CD8-positive, alpha-beta memory T cell (primary cell): ENCODE measurements at regions of chr9 and their contacts with region 1.

Region 1: DNA sequence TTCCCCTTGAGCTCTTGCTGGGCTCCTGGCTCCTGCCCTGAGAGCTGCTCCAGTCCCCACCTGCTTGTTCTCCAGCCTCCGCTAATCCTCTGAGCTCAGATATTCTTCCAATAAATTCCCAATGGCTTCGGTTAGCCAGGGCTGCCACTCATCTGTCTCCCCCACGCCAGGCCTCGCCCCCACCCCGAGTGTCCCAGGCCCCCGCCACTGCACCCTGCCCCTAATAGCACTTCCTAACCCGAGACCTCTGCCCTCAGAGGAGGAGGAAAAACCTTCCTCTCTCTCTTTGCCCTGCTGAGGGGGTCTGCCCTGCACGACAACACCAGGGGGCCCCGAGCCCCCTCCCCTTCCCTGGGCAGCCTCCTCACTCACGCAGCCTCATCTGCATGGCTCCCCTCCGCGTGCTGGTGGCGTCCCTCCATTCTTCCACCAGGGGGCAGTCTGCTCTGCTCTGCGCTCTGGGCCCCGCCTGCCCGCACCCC is 5.4 kb upstream of the LCN15 start:
- DNase-seq: peak in 4 of 5 donors; percentile 21 to 27 (median 24)
- H3K4me3 ChIP-seq: no peak overlapping the region
- H3K4me3 Mint-ChIP-seq: no peak overlapping the region
- H3K27ac ChIP-seq: no peak overlapping the region
- H3K27ac Mint-ChIP-seq: no peak overlapping the region
- H3K4me1 ChIP-seq: no peaks in the 10 kb centered on the region
- H3K4me1 Mint-ChIP-seq: peaks cover 5 to 14% (median 13%) of the 10 kb centered on the region in 3 donors
- H3K27me3 ChIP-seq: no peaks in the 10 kb centered on the region
- H3K27me3 Mint-ChIP-seq: peaks cover 9 to 13% of the 10 kb centered on the region in 2 donors

Region 2: DNA sequence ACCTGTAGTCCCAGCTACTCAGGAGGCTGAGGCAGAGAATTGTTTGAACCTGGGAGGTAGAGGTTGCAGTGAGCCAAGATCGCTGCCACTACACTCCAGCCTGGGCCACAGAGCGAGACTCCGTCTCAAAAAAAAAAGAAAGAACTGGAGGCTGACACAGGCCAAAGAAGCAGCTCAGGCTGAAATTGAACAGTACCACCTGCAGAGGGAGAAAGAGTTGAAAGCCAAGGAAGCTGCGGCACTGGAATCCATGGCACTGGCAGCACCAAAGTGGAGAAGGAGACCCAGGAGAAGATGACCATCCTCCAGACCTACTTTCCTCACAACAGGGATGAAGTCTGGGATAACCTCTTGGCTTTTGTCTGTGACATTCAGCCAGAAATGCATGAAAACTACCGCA is 10.1 kb after region 1 on chr9:
- CTCF ChIA-PET with region 1: interaction called, 13 read pairs
- POLR2A ChIA-PET with region 1: no interaction called
- DNase-seq: no peak
- H3K4me3 ChIP-seq: no peak overlapping the region
- H3K4me3 Mint-ChIP-seq: no peak overlapping the region
- H3K27ac ChIP-seq: no peak overlapping the region
- H3K27ac Mint-ChIP-seq: no peak overlapping the region
- H3K4me1 ChIP-seq: no peaks in the 10 kb centered on the region
- H3K4me1 Mint-ChIP-seq: peaks cover 0 to 3% (median 0%) of the 10 kb centered on the region in 3 donors
- H3K27me3 ChIP-seq: no peaks in the 10 kb centered on the region
- H3K27me3 Mint-ChIP-seq: peaks cover 16 to 22% of the 10 kb centered on the region in 2 donors